ENCODE measurements at regions of chr20 and their contacts with region 1.

Region 1: GRCh38 chr20:57383447-57384347 is 7.5 kb upstream of the RBM38 start:
- DNase-seq: no peak
- H3K4me3 ChIP-seq: no peak overlapping the region
- H3K27ac ChIP-seq: no peak overlapping the region
- H3K4me1 ChIP-seq: peaks cover 0 to 2% (median 0%) of the 10 kb centered on the region in 3 donors
- H3K27me3 ChIP-seq: no peaks in the 10 kb centered on the region
- CTCF ChIP-seq: no peak
- POLR2A ChIP-seq: no peak

Region 2: GRCh38 chr20:57425150-57426013 is 41.7 kb after region 1 on chr20:
- intact Hi-C with region 1: no loop called
- DNase-seq: no peak
- H3K4me3 ChIP-seq: no peak overlapping the region
- H3K27ac ChIP-seq: no peak overlapping the region
- H3K4me1 ChIP-seq: no peaks in the 10 kb centered on the region
- H3K27me3 ChIP-seq: peaks cover 0 to 10% (median 0%) of the 10 kb centered on the region in 4 donors
- CTCF ChIP-seq: no peak
- POLR2A ChIP-seq: no peak

Region 3: DNA sequence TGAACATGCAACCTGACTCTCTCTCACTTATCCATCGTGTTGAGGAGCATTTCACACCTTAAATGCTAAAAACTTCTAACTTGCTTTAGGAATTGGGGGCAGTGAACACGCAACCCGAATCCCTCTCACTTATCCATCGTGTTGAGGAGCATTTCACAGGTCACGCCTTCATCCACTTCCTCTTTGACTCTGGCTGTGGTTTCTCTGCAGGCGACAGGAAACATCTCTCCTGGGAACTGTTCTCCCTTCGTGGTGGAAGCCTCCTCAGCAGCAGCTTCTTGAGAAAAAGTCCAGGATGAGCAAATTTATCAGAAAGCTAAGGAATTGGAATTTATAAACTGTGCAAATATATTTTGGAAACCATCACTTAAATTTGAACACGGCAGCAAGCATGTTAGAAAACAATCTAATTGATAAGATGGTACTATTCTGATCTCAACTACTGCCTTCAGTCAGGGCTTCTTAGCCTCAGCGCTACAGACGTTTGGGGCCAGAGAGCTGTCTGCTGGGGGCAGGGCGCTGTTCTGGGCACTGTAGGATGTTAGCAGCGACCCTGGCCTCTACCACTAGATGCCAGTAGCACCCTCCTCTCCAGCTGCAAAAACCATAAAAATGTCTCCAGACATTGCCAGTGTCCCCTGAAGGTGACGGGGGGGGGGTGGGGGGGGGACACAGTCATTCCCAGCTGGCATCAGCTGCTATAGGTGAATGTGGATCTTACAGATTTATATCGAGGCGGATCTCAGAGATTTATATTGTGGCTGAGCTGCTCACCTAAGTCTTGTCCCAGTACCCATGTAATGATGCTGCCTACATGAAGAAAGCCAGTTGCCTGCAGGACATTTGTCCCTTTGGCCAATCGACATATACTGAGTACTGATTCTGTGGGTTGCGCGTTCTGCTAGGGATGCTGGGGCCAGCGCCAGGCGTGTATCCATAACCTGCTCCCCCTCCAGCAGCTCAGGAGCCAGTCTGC is 115.0 kb after region 1 on chr20:
- intact Hi-C with region 1: loop called (anchors 5 kb)
- DNase-seq: no peak
- H3K4me3 ChIP-seq: no peak overlapping the region
- H3K27ac ChIP-seq: no peak overlapping the region
- H3K4me1 ChIP-seq: peaks cover 0 to 13% (median 8%) of the 10 kb centered on the region in 3 donors
- H3K27me3 ChIP-seq: peaks cover 0 to 27% (median 0%) of the 10 kb centered on the region in 4 donors
- CTCF ChIP-seq: no peak
- POLR2A ChIP-seq: no peak

Region 4: DNA sequence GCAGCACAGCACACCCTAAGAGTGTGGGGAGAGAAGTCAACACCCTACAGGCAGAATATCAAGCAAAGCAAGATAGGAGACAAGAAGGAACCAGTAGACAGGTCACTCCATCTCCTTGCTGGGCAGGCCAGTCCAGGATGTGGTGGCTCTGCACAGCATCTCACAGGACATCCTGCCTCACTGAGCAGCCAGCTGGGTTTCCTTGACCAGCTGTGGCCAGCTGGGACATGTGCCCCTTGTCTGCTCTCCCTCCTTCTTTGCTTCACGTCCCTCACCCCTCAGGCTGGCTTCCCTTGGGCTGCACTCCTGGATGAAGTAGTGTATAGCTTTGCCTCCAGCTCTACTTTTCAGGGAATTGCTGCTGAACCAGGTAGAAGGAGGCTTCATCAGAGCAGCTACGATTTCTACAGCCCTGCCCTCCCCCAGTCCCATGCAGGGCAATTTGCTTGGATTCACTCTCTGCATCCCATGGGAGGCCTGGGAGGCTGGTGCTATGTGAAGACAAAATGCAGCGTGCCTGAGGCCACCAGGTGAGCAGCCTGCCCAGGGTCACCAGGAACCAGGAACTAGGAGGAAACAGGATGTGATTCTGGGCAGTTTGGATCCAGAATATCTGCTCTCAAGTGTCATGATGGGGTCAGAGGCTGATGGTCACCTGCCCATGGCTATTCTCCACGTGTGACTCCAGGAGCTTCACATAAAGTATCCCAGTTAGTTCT is 436.1 kb after region 1 on chr20:
- intact Hi-C with region 1: no loop called
- DNase-seq: no peak
- H3K4me3 ChIP-seq: no peak overlapping the region
- H3K27ac ChIP-seq: no peak overlapping the region
- H3K4me1 ChIP-seq: no peaks in the 10 kb centered on the region
- H3K27me3 ChIP-seq: peaks cover 0 to 31% (median 0%) of the 10 kb centered on the region in 4 donors
- CTCF ChIP-seq: no peak
- POLR2A ChIP-seq: no peak

Measured in esophagus squamous epithelium (tissue), 5 donors.